Endothelial cell of umbilical vein (primary cell): ENCODE measurements at regions of chr4 and their contacts with region 1.

Region 1: DNA sequence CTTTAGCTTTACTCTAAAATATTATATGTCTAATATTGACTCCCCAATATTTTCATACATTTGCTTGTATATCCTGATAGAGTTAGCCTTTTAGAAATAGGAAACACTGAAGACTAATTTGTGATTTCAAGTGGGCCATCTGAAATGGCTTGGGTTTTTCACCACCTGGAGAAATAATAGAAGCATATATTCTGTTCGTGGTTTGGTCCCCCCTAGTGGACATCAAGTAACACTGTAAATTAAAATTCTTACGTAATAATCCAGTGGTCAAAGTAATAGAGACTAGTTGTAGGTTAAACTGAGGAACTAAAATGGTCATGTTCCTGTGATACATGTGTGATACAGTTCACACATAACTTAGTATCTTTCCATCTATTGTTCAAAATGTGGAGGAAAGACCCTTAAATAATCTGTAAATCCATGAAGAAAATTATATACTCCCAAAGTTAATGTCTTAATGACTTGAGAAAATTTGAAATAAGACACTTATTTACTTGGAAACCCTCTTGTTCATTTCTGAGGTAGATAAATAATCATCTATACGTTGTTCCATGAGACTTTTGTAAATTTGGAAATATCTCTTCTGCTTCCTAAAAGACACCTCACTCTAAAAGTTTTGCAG is 79.8 kb upstream of the SMARCAD1 start:
- DNase-seq: peak; percentile 36
- H3K4me3 ChIP-seq: no peak overlapping the region
- H3K27ac ChIP-seq: no peak overlapping the region
- H3K4me1 ChIP-seq: no peaks in the 10 kb centered on the region
- H3K27me3 ChIP-seq: peaks cover 2 to 4% of the 10 kb centered on the region in 2 experiments
- CTCF ChIP-seq: peak; percentile 30 to 46
- POLR2A ChIP-seq: no peak

Region 2: DNA sequence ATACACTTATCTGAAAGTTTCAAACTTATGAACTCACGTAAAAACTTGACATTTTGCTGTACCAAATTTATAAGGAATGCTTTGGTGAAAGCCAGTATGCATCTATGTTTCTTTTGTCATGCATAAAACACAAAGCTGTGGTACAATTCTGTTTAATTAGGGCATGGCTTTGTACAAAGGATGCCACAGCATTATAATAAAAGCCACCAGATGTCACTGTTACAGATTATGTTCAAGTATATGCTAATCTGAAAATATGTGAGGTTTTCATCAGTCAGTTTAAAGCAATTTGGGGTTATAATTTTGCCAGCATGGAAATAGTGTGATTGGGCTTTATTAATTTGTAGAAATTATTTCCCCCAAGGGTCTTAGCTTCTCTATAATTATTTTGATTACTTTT is 230.3 kb before region 1 on chr4:
- CTCF ChIA-PET with region 1: interaction called, 11 read pairs
- POLR2A ChIA-PET with region 1: no interaction called
- dilution Hi-C with region 1: no loop called
- intact Hi-C with region 1: loop called (anchors 1 kb)
- DNase-seq: peak; percentile 24
- H3K4me3 ChIP-seq: no peak overlapping the region
- H3K27ac ChIP-seq: no peak overlapping the region
- H3K4me1 ChIP-seq: no peaks in the 10 kb centered on the region
- H3K27me3 ChIP-seq: no peaks in the 10 kb centered on the region
- CTCF ChIP-seq: peak in 1 of 2 donors; percentile 23
- POLR2A ChIP-seq: no peak